ENCODE measurements at regions of chr12 and their contacts with region 1.

Region 1: DNA sequence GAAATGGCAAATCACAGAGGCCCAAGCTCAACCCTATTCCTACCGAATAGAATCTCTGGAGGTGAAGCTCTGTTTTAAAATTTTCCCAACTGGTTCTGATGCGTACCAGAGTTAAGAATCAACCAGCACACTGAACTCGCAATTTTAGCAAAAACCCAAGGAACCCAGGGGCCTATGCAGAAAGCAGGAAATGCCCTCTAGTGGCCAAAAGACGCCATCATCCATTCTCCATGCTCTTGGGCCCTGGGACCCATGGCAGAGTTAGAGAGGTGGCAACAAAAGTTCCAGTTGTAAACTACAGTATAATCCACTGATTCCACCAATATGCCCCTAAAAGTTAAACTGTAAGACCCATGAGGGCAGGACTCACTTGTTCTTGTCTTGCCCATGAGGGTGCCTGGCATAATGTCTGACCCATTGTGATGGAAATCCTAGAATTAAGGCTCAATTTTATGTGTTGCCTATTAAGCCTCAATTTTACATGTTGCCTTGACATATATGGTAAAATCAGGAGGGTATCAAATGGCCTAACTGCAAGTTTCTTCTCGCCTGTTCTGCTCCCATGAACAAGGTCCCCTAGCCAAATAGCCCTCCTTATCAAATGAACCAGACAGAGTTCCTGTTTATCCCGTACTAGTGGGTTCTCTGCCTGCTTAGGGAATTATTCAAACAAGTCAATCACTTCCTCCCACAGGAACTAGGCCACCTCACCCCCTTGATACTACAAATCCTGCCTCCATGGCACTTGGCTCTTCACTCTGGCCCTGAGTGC is 137.5 kb upstream of the CPM start:
- DNase-seq: peak; percentile 83
- ATAC-seq: peak; percentile 64
- H3K4me3 ChIP-seq: no peak overlapping the region
- H3K27ac ChIP-seq: peak overlapping the region; percentile 21
- H3K4me1 ChIP-seq: peaks cover 39% of the 10 kb centered on the region
- H3K27me3 ChIP-seq: no peaks in the 10 kb centered on the region
- CTCF ChIP-seq: peak; percentile 94

Region 2: DNA sequence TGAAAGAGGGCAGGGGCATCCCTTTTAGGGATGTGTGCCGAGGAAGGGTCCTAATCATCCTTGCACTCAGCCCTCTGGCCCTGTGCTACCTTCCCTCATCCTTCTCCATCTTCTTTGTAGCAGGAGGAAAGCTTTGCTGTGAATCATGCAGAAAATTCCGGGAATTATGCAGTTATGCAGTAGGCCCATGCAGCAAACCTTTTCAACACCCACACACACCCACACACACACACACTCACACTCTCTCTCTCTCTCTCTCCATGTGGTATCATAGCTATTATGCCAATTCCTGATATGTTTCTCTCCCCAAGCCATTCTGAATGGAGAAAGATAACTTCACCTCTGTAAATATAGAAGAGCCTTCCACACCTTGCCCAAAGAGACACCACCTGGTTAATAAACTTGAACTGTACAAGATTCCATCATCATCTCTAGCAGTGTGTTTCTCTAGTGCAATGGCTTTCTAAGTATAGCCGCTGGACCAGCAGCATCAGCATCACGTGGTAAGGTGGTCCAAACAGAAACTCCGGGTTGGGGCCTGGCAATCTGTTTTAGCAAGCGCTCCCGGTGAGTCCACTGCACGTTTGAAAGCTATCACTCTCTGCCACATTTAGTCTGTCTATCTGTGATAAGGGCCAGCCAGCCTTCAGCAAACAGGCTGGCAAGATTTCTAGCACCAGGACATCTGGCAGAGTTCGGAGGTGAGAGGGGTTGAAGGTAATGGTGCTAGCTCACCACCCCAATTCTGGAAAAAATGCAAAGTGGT is 204.9 kb before region 1 on chr12:
- CTCF ChIA-PET with region 1: interaction called, 3 read pairs
- POLR2A ChIA-PET with region 1: no interaction called
- intact Hi-C with region 1: loop called (anchors 1 kb)
- DNase-seq: no peak
- ATAC-seq: no peak
- H3K4me3 ChIP-seq: no peak overlapping the region
- H3K27ac ChIP-seq: no peak overlapping the region
- H3K4me1 ChIP-seq: no peaks in the 10 kb centered on the region
- H3K27me3 ChIP-seq: no peaks in the 10 kb centered on the region
- CTCF ChIP-seq: no peak

Region 3: DNA sequence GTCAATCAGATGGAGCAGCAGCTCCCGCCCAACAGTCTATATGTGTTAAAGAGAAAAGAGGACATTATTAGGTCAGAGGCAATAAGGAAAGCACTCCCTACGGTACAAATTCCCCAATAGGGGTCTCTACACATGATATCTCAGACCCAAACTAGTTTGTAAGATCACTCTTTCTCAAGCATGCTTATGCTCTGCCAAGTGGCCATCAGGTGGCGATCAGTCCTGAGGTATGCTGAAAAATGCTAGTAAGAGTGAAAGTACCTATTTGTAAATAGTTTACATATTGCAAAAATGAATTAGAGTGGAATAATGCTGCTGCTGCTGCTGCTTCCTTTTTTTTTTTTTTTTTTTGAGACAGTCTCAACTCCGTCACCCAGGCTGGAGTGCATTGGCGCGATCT is 198.6 kb before region 1 on chr12:
- CTCF ChIA-PET with region 1: no interaction called
- POLR2A ChIA-PET with region 1: no interaction called
- intact Hi-C with region 1: loop called (anchors 1 kb)
- DNase-seq: peak; percentile 62
- ATAC-seq: peak; percentile 57
- H3K4me3 ChIP-seq: no peak overlapping the region
- H3K27ac ChIP-seq: no peak overlapping the region
- H3K4me1 ChIP-seq: no peaks in the 10 kb centered on the region
- H3K27me3 ChIP-seq: no peaks in the 10 kb centered on the region
- CTCF ChIP-seq: peak; percentile 76

Region 4: DNA sequence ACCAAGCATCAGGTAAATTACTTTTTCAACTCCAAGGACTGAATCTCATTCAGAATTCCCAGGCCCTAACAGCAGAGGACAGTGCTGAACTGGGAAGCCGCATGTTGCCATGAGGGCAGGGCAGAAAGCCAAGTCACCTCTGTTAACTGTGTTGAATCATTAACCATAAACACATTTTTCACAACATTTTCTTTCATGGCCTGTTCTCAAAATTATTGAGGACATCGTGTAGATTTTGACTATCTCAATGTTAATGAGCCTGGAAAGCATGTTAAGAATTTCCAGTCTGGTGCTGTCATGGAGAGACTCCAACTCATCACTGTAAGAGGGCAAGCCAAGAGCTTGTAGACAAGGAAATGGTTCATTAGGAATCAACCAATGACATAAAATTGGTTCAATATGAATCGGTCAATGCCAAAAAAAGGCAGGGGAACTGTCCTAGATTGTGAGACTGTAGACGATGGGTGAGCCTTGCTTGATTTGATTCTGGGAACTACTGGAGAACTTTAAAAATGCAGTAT is 171.2 kb before region 1 on chr12:
- CTCF ChIA-PET with region 1: no interaction called
- POLR2A ChIA-PET with region 1: no interaction called
- intact Hi-C with region 1: loop called (anchors 1 kb)
- DNase-seq: peak; percentile 62
- ATAC-seq: peak; percentile 56
- H3K4me3 ChIP-seq: no peak overlapping the region
- H3K27ac ChIP-seq: no peak overlapping the region
- H3K4me1 ChIP-seq: peaks cover 7% of the 10 kb centered on the region
- H3K27me3 ChIP-seq: no peaks in the 10 kb centered on the region
- CTCF ChIP-seq: peak; percentile 77

Region 5: GRCh38 chr12:69196302-69197288 is 126.1 kb after region 1 on chr12:
- CTCF ChIA-PET with region 1: no interaction called
- POLR2A ChIA-PET with region 1: no interaction called
- intact Hi-C with region 1: no loop called
- DNase-seq: peak; percentile 47
- ATAC-seq: no peak
- H3K4me3 ChIP-seq: no peak overlapping the region
- H3K27ac ChIP-seq: no peak overlapping the region
- H3K4me1 ChIP-seq: no peaks in the 10 kb centered on the region
- H3K27me3 ChIP-seq: no peaks in the 10 kb centered on the region
- CTCF ChIP-seq: peak; percentile 54

Measured in PC-3 (cell line).